WTC11 (cell line): ENCODE measurements at regions of chr22 and their contacts with region 1.

Region 1: GRCh38 chr22:40436505-40437451 is 66.4 kb downstream of the SGSM3 start:
- DNase-seq: no peak
- ATAC-seq: peak; percentile 76
- H3K4me3 Mint-ChIP-seq: no peak overlapping the region
- H3K27ac Mint-ChIP-seq: peak overlapping the region; percentile 22
- H3K4me1 Mint-ChIP-seq: 0 out of 2 replicates have a peak, but pooled peaks cover 9% of the 10 kb centered on the region
- H3K27me3 Mint-ChIP-seq: no peaks in the 10 kb centered on the region
- CTCF ChIP-seq: peak; percentile 54; the same call in 1 of the 2 replicates

Region 2: DNA sequence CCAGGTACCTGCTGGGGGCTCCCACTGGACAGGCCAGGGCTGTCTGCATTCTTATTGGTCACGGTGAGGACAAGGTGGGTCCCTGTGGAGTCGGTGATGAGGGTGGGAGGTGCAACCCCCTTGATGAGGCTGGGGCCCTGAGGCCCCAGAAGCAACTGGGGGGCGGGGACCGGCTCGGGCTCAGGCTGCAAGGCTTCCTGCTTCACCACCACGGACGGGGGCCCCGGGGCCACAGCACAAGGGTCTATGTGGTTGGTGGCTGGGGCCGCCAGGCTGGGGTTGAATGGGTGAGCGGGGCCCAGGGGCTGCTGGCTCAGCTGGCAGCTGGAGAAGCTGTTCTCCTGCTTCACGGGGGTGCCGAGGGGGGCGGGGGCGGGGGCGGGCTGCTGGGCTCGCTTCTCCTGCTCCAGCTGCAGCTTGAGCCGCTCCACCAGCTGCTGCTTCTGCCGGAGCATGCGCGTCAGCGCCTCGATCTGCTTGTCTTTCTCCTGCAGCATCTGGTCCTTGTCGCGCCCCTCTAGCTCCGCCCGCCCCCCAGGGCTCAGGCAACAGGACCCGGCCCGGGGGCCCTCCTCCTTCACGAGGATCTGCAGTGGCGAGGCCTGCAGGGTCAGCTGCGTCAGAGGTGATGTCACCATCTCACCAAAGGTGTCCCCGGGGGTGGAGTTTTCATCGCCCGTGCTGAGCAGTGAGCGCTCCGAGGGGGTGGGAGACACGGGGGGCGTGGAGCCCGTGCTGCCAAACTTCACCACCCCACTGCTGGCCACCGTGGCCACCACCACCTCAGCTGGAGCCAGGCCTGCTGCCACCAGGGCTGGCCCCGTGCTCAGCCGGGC is 18.2 kb before region 1 on chr22:
- CTCF ChIA-PET with region 1: interaction called, 10 read pairs
- POLR2A ChIA-PET with region 1: no interaction called
- DNase-seq: no peak
- ATAC-seq: no peak
- H3K4me3 Mint-ChIP-seq: no peak overlapping the region
- H3K27ac Mint-ChIP-seq: no peak overlapping the region
- H3K4me1 Mint-ChIP-seq: no peaks in the 10 kb centered on the region
- H3K27me3 Mint-ChIP-seq: no peaks in the 10 kb centered on the region
- CTCF ChIP-seq: no peak

Region 3: DNA sequence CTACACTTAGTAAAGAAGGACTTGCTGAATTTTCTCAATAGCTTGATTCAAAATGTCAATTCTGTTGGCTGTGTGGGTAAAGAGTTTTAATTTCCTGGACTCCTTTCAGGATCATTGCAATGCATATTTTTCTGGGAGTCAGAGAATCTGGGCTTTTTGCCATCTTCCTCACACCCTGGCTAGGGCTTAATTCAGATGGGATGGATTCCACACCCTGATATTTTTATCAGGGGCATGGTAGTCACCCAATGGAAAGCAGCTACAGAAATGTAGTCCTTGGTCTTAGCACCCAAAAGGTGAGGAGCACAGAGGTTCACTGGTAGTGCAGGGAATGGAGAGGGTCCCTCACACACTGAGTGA is 12.9 kb after region 1 on chr22:
- CTCF ChIA-PET with region 1: interaction called, 31 read pairs
- POLR2A ChIA-PET with region 1: interaction called, 3 read pairs
- DNase-seq: no peak
- ATAC-seq: no peak
- H3K4me3 Mint-ChIP-seq: no peak overlapping the region
- H3K27ac Mint-ChIP-seq: no peak overlapping the region
- H3K4me1 Mint-ChIP-seq: peaks cover 38% of the 10 kb centered on the region
- H3K27me3 Mint-ChIP-seq: no peaks in the 10 kb centered on the region
- CTCF ChIP-seq: no peak

Region 4: GRCh38 chr22:40519284-40519947 is 82.6 kb after region 1 on chr22:
- CTCF ChIA-PET with region 1: interaction called, 10 read pairs
- POLR2A ChIA-PET with region 1: no interaction called
- DNase-seq: no peak
- ATAC-seq: no peak
- H3K4me3 Mint-ChIP-seq: no peak overlapping the region
- H3K27ac Mint-ChIP-seq: no peak overlapping the region; the same call in 1 of the 2 replicates
- H3K4me1 Mint-ChIP-seq: peaks cover 19% of the 10 kb centered on the region
- H3K27me3 Mint-ChIP-seq: no peaks in the 10 kb centered on the region
- CTCF ChIP-seq: no peak

Region 5: DNA sequence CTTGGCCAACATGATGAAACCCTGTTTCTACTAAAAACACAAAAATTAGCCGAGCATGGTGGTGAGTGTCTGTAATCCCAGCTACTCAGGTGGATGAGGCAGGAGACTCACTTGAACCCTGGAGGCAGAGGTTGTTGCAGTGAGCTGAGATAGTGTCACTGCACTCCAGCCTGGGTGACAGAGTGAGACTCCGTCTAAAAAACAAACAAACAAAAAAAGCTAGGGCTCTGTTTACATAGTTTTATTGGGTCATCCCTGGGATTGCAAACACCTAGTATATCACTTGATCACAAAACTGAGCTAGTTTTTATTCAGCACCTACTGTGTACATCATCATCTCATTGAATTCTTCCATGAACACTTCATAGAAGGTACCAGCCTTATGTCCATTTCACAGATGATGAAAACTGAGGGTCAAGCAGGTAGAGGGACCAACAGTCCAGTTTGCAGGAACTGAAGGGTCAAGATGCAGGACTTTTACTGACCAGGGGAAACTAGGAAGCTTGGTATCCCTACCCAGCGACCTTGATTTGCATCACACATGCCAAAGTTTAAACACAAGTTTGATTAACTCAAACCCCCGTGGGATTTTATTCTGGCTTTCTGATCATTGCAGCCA is 208.9 kb after region 1 on chr22:
- CTCF ChIA-PET with region 1: interaction called, 54 read pairs
- POLR2A ChIA-PET with region 1: no interaction called
- DNase-seq: no peak
- ATAC-seq: no peak
- H3K4me3 Mint-ChIP-seq: no peak overlapping the region
- H3K27ac Mint-ChIP-seq: no peak overlapping the region
- H3K4me1 Mint-ChIP-seq: peaks cover 5% of the 10 kb centered on the region
- H3K27me3 Mint-ChIP-seq: no peaks in the 10 kb centered on the region
- CTCF ChIP-seq: no peak